Activated naive CD4-positive, alpha-beta T cell treated with anti-CD3 and anti-CD28 coated beads for 36 hours (primary cell): ENCODE measurements at regions of chr3 and their contacts with region 1.

Region 1: GRCh38 chr3:107064445-107065060 is 312.7 kb upstream of the CCDC54 start:
- DNase-seq: peak; percentile 85
- H3K4me3 Mint-ChIP-seq: no peak overlapping the region
- H3K27ac Mint-ChIP-seq: no peak overlapping the region
- H3K4me1 Mint-ChIP-seq: peaks cover 14% of the 10 kb centered on the region
- H3K27me3 Mint-ChIP-seq: peaks cover 7% of the 10 kb centered on the region

Region 2: GRCh38 chr3:105691633-105692032 is 1372.9 kb before region 1 on chr3:
- CTCF ChIA-PET with region 1: no interaction called
- intact Hi-C with region 1: loop called (anchors 10 kb)
- DNase-seq: no peak
- H3K4me3 Mint-ChIP-seq: no peak overlapping the region
- H3K27ac Mint-ChIP-seq: no peak overlapping the region
- H3K4me1 Mint-ChIP-seq: peaks cover 30% of the 10 kb centered on the region
- H3K27me3 Mint-ChIP-seq: no peaks in the 10 kb centered on the region

Region 3: GRCh38 chr3:106824856-106825255 is 239.7 kb before region 1 on chr3:
- CTCF ChIA-PET with region 1: no interaction called
- intact Hi-C with region 1: loop called (anchors 5 kb)
- DNase-seq: no peak
- H3K4me3 Mint-ChIP-seq: no peak overlapping the region
- H3K27ac Mint-ChIP-seq: no peak overlapping the region
- H3K4me1 Mint-ChIP-seq: peaks cover 4% of the 10 kb centered on the region
- H3K27me3 Mint-ChIP-seq: no peaks in the 10 kb centered on the region

Region 4: DNA sequence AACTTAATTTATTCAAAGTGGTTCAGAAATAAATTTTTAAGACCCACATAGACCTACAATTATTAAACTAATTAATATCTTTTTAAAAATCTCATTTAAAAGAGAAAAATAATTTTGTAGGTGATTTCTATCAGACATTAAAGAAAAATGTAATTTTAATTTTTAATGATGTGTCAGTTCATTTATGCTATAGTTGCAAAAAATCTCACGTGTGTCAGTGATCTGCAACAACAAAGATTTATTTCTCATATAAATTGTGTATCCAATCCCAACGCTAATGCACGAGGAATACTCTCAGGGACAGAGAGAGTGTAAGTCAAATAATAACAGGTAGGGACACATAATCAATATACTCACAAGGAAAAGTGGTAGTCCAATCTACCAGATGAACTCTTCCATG is 143.9 kb before region 1 on chr3:
- CTCF ChIA-PET with region 1: no interaction called
- intact Hi-C with region 1: no loop called
- DNase-seq: no peak
- H3K4me3 Mint-ChIP-seq: no peak overlapping the region
- H3K27ac Mint-ChIP-seq: no peak overlapping the region
- H3K4me1 Mint-ChIP-seq: no peaks in the 10 kb centered on the region
- H3K27me3 Mint-ChIP-seq: no peaks in the 10 kb centered on the region

Region 5: DNA sequence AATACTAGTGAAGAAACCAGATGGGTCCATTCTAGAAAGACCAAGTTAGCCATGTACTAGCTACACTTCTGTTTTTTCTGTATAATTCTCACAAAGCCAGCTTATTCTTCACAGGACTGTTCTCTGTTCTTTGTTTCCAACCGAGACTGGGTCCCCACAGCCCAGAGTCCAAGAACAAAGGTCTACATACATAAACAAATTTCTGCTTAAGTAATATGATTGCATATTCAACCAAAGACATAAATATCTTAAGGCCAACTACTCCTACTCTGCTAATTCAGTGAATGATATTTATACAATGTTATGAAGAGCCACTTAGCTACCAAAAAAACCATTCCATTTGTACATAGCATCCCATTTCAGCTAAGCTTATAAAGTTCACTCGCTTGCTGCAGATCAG is 12.8 kb after region 1 on chr3:
- CTCF ChIA-PET with region 1: interaction called, 10 read pairs
- intact Hi-C with region 1: no loop called
- DNase-seq: no peak
- H3K4me3 Mint-ChIP-seq: no peak overlapping the region
- H3K27ac Mint-ChIP-seq: no peak overlapping the region
- H3K4me1 Mint-ChIP-seq: no peaks in the 10 kb centered on the region
- H3K27me3 Mint-ChIP-seq: no peaks in the 10 kb centered on the region